Gastrocnemius medialis (tissue), 4 donors: ENCODE measurements at regions of chr17 and their contacts with region 1.

Region 1: DNA sequence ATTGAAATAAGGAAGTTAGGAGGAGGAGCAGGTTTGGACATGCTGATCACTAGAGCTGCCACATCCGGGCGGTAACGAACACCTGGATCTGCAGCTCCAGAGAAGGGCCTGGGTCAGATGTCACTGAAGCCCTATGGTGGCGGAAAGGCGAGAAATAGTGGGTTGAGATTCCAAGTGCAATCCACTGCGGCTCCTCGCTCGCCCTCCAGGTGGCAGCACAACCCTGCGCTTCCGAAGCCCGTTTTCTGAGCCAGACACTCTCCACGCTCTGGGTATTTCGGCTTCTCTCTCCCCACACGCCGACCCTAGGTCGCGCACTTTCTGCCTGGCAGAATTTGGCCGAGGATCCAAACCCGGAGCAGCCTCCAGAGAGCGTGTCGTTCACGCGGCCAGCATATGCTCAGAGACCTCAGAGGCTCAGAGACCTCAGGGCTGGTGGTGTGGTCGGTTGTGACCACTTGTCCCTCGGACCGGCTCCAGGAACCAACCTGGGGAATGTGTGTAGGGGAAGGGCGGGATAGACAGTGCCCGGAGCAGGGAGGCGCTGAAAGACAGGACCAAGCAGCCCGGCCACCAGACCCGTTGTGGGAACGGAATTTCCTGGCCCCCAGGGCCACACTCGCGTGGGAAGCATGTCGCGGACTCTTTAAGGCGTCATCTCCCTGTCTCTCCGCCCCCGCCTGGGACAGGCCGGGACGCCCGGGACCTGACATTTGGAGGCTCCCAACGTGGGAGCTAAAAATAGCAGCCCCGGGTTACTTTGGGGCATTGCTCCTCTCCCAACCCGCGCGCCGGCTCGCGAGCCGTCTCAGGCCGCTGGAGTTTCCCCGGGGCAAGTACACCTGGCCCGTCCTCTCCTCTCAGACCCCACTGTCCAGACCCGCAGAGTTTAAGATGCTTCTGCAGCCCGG is 744 bp upstream of the SLC2A4 start:
- DNase-seq: peak; percentile 83 to 91
- ATAC-seq: peak; percentile 50 to 53
- H3K4me3 ChIP-seq: peak overlapping the region; percentile 70 to 80 (median 76)
- H3K27ac ChIP-seq: peak overlapping the region; percentile 95 to 100 (median 98)
- H3K4me1 ChIP-seq: peaks cover 33% of the 10 kb centered on the region in 2 donors
- H3K27me3 ChIP-seq: no peaks in the 10 kb centered on the region
- CTCF ChIP-seq: peak; percentile 95 to 99 (median 98)
- POLR2A ChIP-seq: peak; percentile 51 to 66

Region 2: GRCh38 chr17:7252176-7253043 is 28.4 kb before region 1 on chr17 and contains the start of gene ELP5:
- in situ Hi-C with region 1: no loop called
- intact Hi-C with region 1: loop called (anchors 2 kb)
- DNase-seq: peak; percentile 86 to 92
- ATAC-seq: peak; percentile 58 to 61
- H3K4me3 ChIP-seq: peak within 1 kb of the TSS; percentile 69 to 98 (median 81)
- H3K27ac ChIP-seq: peak within 1 kb of the TSS; percentile 98 to 100 (median 98)
- H3K4me1 ChIP-seq: peaks cover 39 to 43% of the 10 kb centered on the region in 2 donors
- H3K27me3 ChIP-seq: no peaks in the 10 kb centered on the region
- CTCF ChIP-seq: peak in 3 of 5 experiments; percentile 36 to 54 (median 40)
- POLR2A ChIP-seq: peak in 1 of 2 donors; percentile 70
- total RNA-seq, gene ELP5: 13.3 to 52.7 (median 26.7) TPM

Region 3: GRCh38 chr17:7296189-7296902 is 15.6 kb after region 1 on chr17:
- in situ Hi-C with region 1: no loop called
- intact Hi-C with region 1: loop called (anchors 1 kb)
- DNase-seq: peak; percentile 85 to 91
- ATAC-seq: peak; percentile 55 to 58
- H3K4me3 ChIP-seq: peak overlapping the region; percentile 25 to 30 (median 28)
- H3K27ac ChIP-seq: peak overlapping the region; percentile 95 to 100 (median 98)
- H3K4me1 ChIP-seq: peaks cover 45 to 46% of the 10 kb centered on the region in 2 donors
- H3K27me3 ChIP-seq: no peaks in the 10 kb centered on the region
- CTCF ChIP-seq: peak; percentile 91 to 100 (median 99)
- POLR2A ChIP-seq: peak; percentile 74 to 80